ENCODE measurements at regions of chr1 and their contacts with region 1.

Region 1: DNA sequence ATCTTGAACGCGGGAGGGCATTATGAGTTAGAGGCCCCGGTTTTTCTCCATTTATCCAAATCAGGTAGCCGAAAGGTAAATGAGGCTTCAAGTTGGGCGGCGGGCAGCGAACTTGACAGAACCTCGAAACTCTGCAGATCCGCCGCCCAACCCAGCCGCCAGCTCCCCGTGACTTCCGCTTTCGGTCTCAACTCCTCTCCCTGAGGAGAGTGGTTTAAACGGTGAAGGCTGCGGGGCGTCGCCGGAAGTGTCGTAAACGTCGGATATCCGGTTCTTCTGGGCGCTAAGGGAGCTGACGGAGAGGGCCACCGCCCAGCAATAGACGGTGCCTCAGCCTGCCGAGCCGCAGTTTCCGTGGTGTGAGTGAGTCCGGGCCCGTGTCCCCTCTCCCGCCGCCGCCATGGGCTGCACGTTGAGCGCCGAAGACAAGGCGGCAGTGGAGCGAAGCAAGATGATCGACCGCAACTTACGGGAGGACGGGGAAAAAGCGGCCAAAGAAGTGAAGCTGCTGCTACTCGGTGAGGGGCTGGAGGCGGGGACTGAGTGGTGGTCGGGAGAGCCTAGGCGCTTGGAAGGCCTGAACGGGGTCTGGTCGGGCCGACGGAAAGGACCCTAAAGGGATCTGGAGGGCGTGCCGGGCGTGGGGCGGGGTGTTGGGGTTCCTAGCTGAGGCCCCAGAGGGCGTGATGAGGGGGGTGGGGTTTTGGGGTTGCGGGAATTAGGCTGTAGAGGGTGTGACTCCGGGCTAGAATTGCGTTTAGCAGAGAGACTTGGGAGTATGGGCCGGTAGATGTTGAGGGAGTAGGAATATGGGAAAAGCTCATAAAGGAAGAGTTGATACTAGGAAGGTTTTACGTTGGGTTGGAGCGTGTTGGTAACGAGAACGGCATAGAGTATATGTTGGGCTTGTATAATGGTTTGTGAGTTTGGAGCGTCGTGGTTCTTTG is at the start of gene GNAI3:
- DNase-seq: peak; percentile 85
- ATAC-seq: peak; percentile 95
- H3K4me3 ChIP-seq: peak within 1 kb of the TSS; percentile 92
- H3K27ac ChIP-seq: peak within 1 kb of the TSS; percentile 96
- H3K4me1 ChIP-seq: peaks cover 6% of the 10 kb centered on the region
- H3K27me3 ChIP-seq: no peaks in the 10 kb centered on the region
- CTCF ChIP-seq: no peak
- EP300 ChIP-seq: peak; percentile 13 to 61; a peak in 3 of 4 replicates
- POLR2A ChIP-seq: peak; percentile 99
- RAD21 ChIP-seq: no peak
- polyA plus RNA-seq, gene GNAI3: 6.2 TPM

Region 2: GRCh38 chr1:109493805-109494539 is 54.6 kb before region 1 on chr1 and contains the start of gene CYB561D1:
- CTCF ChIA-PET with region 1: interaction called, 16 read pairs
- POLR2A ChIA-PET with region 1: no interaction called
- RAD21 ChIA-PET with region 1: interaction called, 5 read pairs
- SMC1A ChIA-PET with region 1: interaction called, 4 read pairs
- in situ Hi-C with region 1: no loop called
- intact Hi-C with region 1: no loop called
- DNase-seq: peak; percentile 55
- ATAC-seq: peak; percentile 94
- H3K4me3 ChIP-seq: peak within 1 kb of the TSS; percentile 82
- H3K27ac ChIP-seq: peak within 1 kb of the TSS; percentile 79
- H3K4me1 ChIP-seq: peaks cover 4% of the 10 kb centered on the region
- H3K27me3 ChIP-seq: no peaks in the 10 kb centered on the region
- CTCF ChIP-seq: peak; percentile 94 to 98 (median 95); a peak in 5 of 6 replicates
- EP300 ChIP-seq: 0 out of 4 replicates have a peak, but pooled peaks of 1 of the 2 experiments have one; percentile 14
- POLR2A ChIP-seq: peak; percentile 96
- RAD21 ChIP-seq: peak; percentile 41; the same call in 1 of the 2 replicates
- polyA plus RNA-seq, gene CYB561D1: 0.68 to 1.0 TPM

Region 3: GRCh38 chr1:109570417-109570827 is 21.8 kb after region 1 on chr1:
- CTCF ChIA-PET with region 1: interaction called, 4 read pairs
- POLR2A ChIA-PET with region 1: interaction called, 7 read pairs
- RAD21 ChIA-PET with region 1: interaction called, 5 read pairs
- SMC1A ChIA-PET with region 1: interaction called, 17 read pairs
- in situ Hi-C with region 1: no loop called
- intact Hi-C with region 1: no loop called
- DNase-seq: no peak
- ATAC-seq: no peak
- H3K4me3 ChIP-seq: no peak overlapping the region
- H3K27ac ChIP-seq: no peak overlapping the region
- H3K4me1 ChIP-seq: peaks cover 15% of the 10 kb centered on the region
- H3K27me3 ChIP-seq: no peaks in the 10 kb centered on the region
- CTCF ChIP-seq: no peak
- EP300 ChIP-seq: no peak
- POLR2A ChIP-seq: no peak
- RAD21 ChIP-seq: no peak

Region 4: DNA sequence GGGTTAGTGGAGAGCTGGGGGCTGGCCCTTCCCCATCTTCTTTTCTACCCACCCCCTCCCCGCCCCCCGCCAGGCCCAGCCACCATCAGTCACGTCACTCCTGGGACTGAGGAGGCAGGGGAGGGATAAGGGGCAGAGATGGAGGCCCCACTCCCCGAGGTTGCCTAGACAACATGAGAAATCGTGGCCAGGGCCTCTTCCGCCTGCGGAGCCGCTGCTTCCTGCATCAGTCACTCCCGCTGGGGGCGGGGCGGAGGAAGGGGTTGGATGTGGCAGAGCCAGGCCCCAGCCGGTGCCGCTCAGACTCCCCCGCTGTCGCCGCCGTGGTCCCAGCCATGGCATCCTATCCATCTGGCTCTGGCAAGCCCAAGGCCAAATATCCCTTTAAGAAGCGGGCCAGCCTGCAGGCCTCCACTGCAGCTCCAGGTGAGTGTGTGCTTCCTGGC is 72.3 kb after region 1 on chr1:
- CTCF ChIA-PET with region 1: interaction called, 20 read pairs
- POLR2A ChIA-PET with region 1: interaction called, 34 read pairs
- RAD21 ChIA-PET with region 1: interaction called, 15 read pairs
- SMC1A ChIA-PET with region 1: interaction called, 18 read pairs
- in situ Hi-C with region 1: loop called (anchors 5 kb)
- intact Hi-C with region 1: loop called (anchors 1 kb)
- DNase-seq: peak; percentile 66
- ATAC-seq: peak; percentile 81
- H3K4me3 ChIP-seq: peak overlapping the region; percentile 85
- H3K27ac ChIP-seq: peak overlapping the region; percentile 72
- H3K4me1 ChIP-seq: peaks cover 41% of the 10 kb centered on the region
- H3K27me3 ChIP-seq: no peaks in the 10 kb centered on the region
- CTCF ChIP-seq: no peak
- EP300 ChIP-seq: no peak
- POLR2A ChIP-seq: peak; percentile 52; the same call in 1 of the 2 replicates
- RAD21 ChIP-seq: no peak

Region 5: GRCh38 chr1:109649491-109649914 is 100.9 kb after region 1 on chr1:
- CTCF ChIA-PET with region 1: interaction called, 27 read pairs
- POLR2A ChIA-PET with region 1: interaction called, 3 read pairs
- RAD21 ChIA-PET with region 1: interaction called, 10 read pairs
- SMC1A ChIA-PET with region 1: interaction called, 24 read pairs
- in situ Hi-C with region 1: no loop called
- intact Hi-C with region 1: loop called (anchors 5 kb)
- DNase-seq: no peak
- ATAC-seq: no peak
- H3K4me3 ChIP-seq: no peak overlapping the region
- H3K27ac ChIP-seq: no peak overlapping the region
- H3K4me1 ChIP-seq: no peaks in the 10 kb centered on the region
- H3K27me3 ChIP-seq: no peaks in the 10 kb centered on the region
- CTCF ChIP-seq: peak in 1 of 3 experiments; percentile 24; a peak in 1 of 6 replicates
- EP300 ChIP-seq: no peak
- POLR2A ChIP-seq: no peak
- RAD21 ChIP-seq: peak; percentile 29; the same call in 1 of the 2 replicates

Region 6: DNA sequence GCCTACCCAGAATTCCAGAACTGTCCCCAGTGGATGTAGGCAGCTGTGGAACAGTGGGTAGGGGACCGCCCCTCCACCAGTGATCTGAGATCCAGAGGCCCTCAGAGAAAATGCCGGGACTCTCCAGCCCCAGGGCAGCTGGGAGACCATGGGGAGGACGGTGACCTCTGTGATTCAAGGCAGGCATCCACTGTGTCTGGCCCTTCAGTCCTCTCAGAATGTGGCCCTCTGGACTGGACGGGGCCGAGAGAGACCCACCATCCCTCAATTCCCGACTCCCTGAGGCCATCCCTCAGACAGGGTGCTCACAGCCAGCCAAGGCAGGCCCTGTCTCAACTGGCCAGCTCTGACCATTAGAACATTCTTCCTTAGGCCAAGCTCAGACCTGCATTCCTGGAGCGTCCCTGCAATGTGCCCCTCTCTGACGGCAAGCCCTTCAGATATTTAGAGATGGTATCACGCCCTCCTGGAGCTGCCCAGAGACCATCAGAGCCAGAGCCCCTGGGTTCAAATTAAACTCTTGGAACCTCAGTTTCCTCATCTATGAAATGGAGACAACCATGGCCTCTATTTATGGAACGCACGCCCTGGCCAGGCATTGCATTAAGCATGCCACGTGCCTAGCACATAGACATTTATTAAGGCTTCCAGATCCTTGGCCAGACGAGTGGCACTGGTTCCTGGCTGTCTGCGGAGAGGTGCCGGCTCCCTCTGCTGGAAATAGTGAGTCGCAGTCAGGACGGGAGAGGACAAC is 224.7 kb after region 1 on chr1:
- CTCF ChIA-PET with region 1: interaction called, 104 read pairs
- POLR2A ChIA-PET with region 1: interaction called, 4 read pairs
- RAD21 ChIA-PET with region 1: interaction called, 45 read pairs
- SMC1A ChIA-PET with region 1: interaction called, 58 read pairs
- in situ Hi-C with region 1: loop called (anchors 5 kb)
- intact Hi-C with region 1: loop called (anchors 1 kb)
- DNase-seq: peak; percentile 28
- ATAC-seq: peak; percentile 94
- H3K4me3 ChIP-seq: no peak overlapping the region
- H3K27ac ChIP-seq: no peak overlapping the region
- H3K4me1 ChIP-seq: no peaks in the 10 kb centered on the region
- H3K27me3 ChIP-seq: peaks cover 0 to 2% of the 10 kb centered on the region in 2 experiments; a peak in 1 of 4 replicates
- CTCF ChIP-seq: peak; percentile 90 to 97 (median 92)
- EP300 ChIP-seq: no peak
- POLR2A ChIP-seq: no peak
- RAD21 ChIP-seq: peak; percentile 98

Measured in GM12878 (cell line).